Gastrocnemius medialis (tissue), 4 donors: ENCODE measurements at regions of chr1 and their contacts with region 1.

Region 1: DNA sequence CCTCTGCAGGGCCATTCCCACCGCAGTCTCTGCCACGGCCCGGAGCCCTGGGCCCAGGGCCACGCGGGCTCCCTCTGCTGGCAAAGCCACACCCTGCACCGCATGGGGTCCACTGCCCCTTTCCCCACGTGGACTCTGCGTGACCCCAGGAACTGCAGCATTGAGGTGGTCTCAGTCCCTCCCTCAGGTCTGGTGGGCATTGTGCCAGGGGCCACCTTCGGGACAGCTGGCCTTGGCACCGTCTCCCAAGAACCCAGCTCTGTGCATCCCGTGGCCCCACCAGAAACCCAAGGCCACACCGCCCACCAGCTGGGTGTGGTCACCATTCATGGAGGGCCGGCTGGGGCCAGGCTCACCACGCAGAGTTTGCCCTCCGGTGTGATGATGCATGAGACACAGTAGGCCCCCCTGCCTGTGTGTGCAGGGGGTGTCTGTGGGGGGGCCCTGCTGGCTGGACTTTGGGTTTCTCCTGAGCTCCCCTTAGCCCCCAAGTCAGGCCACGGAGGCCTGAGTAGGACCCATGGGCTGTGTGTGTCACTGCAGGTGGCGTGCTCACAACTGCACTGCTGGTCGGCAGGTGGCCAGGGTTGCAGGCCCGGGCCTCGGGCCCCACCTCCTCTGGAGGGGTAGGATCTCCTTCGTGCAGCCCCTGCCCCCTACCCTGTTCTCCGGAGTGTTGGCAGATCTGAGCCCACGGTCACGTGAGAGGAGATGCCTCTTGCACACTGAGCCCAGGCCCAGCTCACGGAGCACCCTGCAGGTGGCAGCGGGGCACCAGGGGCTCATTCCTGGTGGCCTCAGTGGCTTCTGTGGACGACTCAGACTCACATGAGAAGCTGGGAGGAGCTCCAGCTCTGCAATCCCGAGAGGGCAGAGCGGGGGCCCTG is 5.8 kb downstream of the VWA1 start:
- DNase-seq: peak in 1 of 2 donors; percentile 36
- ATAC-seq: peak in 1 of 2 donors; percentile 78
- H3K4me3 ChIP-seq: no peak overlapping the region
- H3K27ac ChIP-seq: no peak overlapping the region
- H3K4me1 ChIP-seq: peaks cover 3 to 19% of the 10 kb centered on the region in 2 donors
- H3K27me3 ChIP-seq: peaks cover 0 to 20% (median 7%) of the 10 kb centered on the region in 3 donors
- CTCF ChIP-seq: peak; percentile 80 to 96 (median 91)
- POLR2A ChIP-seq: no peak

Region 2: DNA sequence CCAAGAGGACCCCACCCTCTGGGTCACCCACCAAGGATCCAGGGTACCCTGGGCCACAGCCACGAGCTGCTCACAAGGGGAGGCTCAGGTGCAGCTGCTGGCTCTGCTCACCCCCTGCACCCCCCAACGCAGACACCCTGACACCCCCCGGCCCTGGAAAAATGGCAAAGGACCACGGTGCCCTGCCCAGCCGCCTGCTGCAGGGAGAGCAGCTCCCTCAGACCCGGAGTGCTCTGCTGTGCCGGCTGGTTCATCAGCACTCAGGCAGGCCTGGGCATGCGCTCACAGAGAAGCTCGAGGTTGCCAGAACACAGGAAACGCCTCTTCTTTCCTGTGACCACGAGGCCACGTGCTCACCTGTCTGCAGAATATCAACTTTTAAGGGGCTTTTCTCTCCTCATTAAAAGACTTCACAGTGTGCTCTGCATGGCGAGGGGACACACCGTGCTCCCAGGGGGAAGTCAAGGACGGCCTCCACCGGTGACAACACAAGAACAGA is 190.4 kb before region 1 on chr1:
- in situ Hi-C with region 1: no loop called
- intact Hi-C with region 1: no loop called
- DNase-seq: no peak
- ATAC-seq: no peak
- H3K4me3 ChIP-seq: no peak overlapping the region
- H3K27ac ChIP-seq: no peak overlapping the region
- H3K4me1 ChIP-seq: no peaks in the 10 kb centered on the region
- H3K27me3 ChIP-seq: peaks cover 10 to 17% (median 13%) of the 10 kb centered on the region in 3 donors
- CTCF ChIP-seq: no peak
- POLR2A ChIP-seq: no peak

Region 3: DNA sequence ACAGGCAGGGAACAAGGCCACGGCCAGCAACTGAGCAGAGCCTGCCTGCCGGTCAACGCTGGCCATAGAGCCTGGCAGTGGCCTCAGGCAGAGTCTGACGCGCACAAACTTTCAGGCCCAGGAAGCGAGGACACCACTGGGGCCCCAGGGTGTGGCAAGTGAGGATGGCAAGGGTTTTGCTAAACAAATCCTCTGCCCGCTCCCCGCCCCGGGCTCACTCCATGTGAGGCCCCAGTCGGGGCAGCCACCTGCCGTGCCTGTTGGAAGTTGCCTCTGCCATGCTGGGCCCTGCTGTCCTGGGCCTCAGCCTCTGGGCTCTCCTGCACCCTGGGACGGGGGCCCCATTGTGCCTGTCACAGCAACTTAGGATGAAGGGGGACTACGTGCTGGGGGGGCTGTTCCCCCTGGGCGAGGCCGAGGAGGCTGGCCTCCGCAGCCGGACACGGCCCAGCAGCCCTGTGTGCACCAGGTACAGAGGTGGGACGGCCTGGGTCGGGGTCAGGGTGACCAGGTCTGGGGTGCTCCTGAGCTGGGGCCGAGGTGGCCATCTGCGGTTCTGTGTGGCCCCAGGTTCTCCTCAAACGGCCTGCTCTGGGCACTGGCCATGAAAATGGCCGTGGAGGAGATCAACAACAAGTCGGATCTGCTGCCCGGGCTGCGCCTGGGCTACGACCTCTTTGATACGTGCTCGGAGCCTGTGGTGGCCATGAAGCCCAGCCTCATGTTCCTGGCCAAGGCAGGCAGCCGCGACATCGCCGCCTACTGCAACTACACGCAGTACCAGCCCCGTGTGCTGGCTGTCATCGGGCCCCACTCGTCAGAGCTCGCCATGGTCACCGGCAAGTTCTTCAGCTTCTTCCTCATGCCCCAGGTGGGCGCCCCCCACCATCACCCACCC is 109.9 kb before region 1 on chr1 and contains the start of gene TAS1R3:
- in situ Hi-C with region 1: no loop called
- intact Hi-C with region 1: no loop called
- DNase-seq: no peak
- ATAC-seq: peak in 1 of 2 donors; percentile 14
- H3K4me3 ChIP-seq: no peak within 1 kb of the TSS
- H3K27ac ChIP-seq: no peak within 1 kb of the TSS
- H3K4me1 ChIP-seq: peaks cover 26 to 34% of the 10 kb centered on the region in 2 donors
- H3K27me3 ChIP-seq: no peaks in the 10 kb centered on the region
- CTCF ChIP-seq: no peak
- POLR2A ChIP-seq: no peak
- total RNA-seq, gene TAS1R3: 0.20 to 0.44 TPM in 2 of 4 donors, not detected in the others

Region 4: DNA sequence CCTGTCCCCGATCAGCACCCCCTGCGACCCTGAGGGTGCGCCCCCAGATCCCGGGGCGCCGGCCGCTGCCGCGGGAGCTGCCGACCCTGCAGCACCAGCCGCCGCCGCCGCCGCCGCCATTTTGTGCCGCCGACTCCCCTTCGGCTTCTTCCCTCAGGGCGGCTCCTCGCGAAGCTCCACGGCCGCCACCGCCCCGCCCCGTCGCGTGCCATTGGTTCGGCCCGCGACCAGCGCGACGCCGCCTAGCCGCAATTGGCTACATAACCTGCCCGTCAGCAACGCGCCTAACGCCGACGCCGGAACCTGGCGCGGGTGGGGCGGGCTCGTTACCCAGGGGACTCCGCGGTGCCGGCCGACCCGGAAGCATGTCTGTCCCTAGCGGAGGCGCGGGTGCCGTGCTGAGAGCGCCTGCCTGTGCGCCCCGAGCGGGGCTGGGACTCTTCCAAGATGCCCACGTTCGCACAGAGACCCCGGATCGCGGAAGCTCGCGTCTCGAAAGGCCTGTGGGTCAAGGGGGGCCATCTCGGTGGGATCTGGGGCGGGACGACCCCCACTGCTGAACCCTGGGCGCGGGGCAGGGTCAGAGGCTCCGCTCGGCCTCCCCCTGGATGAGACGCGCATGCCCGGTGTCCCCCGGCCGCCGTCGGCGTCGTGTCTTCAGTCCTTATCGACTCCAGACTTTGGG is 41.9 kb before region 1 on chr1 and contains the start of gene CCNL2:
- in situ Hi-C with region 1: no loop called
- intact Hi-C with region 1: loop called (anchors 1 kb)
- DNase-seq: peak; percentile 96 to 98
- ATAC-seq: peak; percentile 89 to 93
- H3K4me3 ChIP-seq: peak within 1 kb of the TSS; percentile 65 to 98 (median 84)
- H3K27ac ChIP-seq: peak within 1 kb of the TSS; percentile 80 to 96 (median 92)
- H3K4me1 ChIP-seq: peaks cover 37 to 39% of the 10 kb centered on the region in 2 donors
- H3K27me3 ChIP-seq: no peaks in the 10 kb centered on the region
- CTCF ChIP-seq: peak; percentile 80 to 82 (median 82)
- POLR2A ChIP-seq: peak; percentile 81 to 89
- total RNA-seq, gene CCNL2: 35.0 to 91.1 (median 43.7) TPM

Region 5: GRCh38 chr1:1471389-1472052 is 30.3 kb after region 1 on chr1 and contains the start of gene ATAD3B:
- in situ Hi-C with region 1: no loop called
- intact Hi-C with region 1: no loop called
- DNase-seq: peak; percentile 90 to 91
- ATAC-seq: peak; percentile 96 to 99
- H3K4me3 ChIP-seq: peak within 1 kb of the TSS; percentile 63 to 86 (median 80)
- H3K27ac ChIP-seq: peak within 1 kb of the TSS; percentile 82 to 92 (median 86)
- H3K4me1 ChIP-seq: peaks cover 9 to 25% of the 10 kb centered on the region in 2 donors
- H3K27me3 ChIP-seq: no peaks in the 10 kb centered on the region
- CTCF ChIP-seq: peak in 1 of 5 experiments; percentile 11
- POLR2A ChIP-seq: peak; percentile 68 to 80
- total RNA-seq, gene ATAD3B: 3.5 to 7.1 (median 5.9) TPM